IMR-90 (cell line): ENCODE measurements at regions of chr20 and their contacts with region 1.

Region 1: DNA sequence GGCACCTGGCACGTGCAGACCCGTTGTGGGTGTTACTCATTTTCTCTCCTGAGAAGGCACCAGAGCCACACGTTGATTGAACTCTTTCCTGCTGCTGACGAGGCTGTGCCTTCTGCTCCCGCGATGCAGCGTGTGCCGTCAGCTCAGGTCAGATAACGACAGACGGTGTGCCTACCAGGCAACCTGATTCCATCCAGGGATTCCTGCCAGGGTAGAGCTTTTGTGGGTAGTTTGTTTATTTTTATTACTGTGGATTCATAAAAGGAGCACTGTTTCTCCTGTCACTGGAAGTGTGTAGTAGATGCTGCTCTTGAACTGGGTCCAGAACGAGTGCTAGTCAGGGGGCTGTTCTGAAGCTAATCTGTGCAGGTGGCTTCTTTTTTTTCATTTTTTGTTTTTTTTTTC is 20.7 kb downstream of the PRPF6 start:
- DNase-seq: peak; percentile 40
- ATAC-seq: peak; percentile 33
- H3K4me3 ChIP-seq: no peak overlapping the region
- H3K27ac ChIP-seq: no peak overlapping the region
- H3K4me1 ChIP-seq: peaks cover 2% of the 10 kb centered on the region; the same call in 1 of the 2 replicates
- H3K27me3 ChIP-seq: no peaks in the 10 kb centered on the region
- CTCF ChIP-seq: no peak
- POLR2A ChIP-seq: no peak
- RAD21 ChIP-seq: no peak

Region 2: DNA sequence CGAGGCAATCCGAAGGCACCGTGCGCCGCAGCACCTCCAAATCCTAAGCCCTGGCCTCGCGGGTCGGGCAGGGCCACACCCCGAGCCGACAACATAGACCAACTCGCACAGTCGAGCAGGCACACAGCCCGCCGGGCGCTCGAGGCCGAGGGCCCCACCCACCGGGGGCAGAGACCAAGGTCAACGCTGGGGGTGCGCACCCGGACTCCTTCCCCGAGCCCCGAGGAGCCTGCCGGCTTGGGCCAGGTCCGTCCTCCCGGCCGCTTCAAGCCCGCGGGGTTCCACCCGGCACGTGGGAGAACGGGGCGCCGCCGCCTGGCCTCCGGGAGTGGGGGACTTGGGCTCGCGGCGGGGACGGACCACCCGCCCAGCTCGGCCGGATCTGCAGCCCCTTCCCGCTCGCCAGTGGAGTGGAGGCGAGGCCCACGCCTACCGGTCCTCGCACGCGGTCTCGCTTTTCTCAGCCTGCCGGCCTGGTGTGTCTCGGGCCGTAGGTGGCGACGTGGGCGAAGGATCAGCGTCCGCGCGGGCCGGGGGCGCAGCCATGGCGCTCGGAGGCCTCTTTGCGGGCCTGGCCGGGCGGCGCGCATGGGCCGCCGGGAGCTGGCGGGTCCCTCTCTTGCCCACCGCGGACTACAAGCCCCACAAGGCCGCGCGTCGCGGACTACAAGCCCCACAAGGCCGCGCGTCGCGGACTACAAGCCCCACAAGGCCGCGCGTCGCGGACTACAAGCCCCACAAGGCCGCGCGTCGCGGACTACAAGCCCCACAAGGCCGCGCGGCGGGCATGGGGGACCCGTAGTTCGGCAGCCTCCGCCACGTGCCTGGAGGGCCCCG is 45.6 kb before region 1 on chr20 and contains the start of gene UCKL1:
- CTCF ChIA-PET with region 1: interaction called, 10 read pairs
- POLR2A ChIA-PET with region 1: no interaction called
- dilution Hi-C with region 1: no loop called
- in situ Hi-C with region 1: no loop called
- intact Hi-C with region 1: no loop called
- DNase-seq: peak; percentile 91
- ATAC-seq: peak; percentile 79
- H3K4me3 ChIP-seq: peak within 1 kb of the TSS; percentile 94
- H3K27ac ChIP-seq: peak within 1 kb of the TSS; percentile 99
- H3K4me1 ChIP-seq: peaks cover 24% of the 10 kb centered on the region
- H3K27me3 ChIP-seq: no peaks in the 10 kb centered on the region
- CTCF ChIP-seq: no peak
- POLR2A ChIP-seq: peak; percentile 33; the same call in 1 of the 2 replicates
- RAD21 ChIP-seq: no peak
- total RNA-seq, gene UCKL1: 16.7 and 18.3 TPM in 2 replicates

Region 3: GRCh38 chr20:64223526-64224067 is 222.0 kb after region 1 on chr20:
- CTCF ChIA-PET with region 1: no interaction called
- POLR2A ChIA-PET with region 1: no interaction called
- dilution Hi-C with region 1: no loop called
- in situ Hi-C with region 1: no loop called
- intact Hi-C with region 1: no loop called
- DNase-seq: peak; percentile 46
- ATAC-seq: peak; percentile 25
- H3K4me3 ChIP-seq: no peak overlapping the region
- H3K27ac ChIP-seq: peak overlapping the region; percentile 86
- H3K4me1 ChIP-seq: peaks cover 27% of the 10 kb centered on the region
- H3K27me3 ChIP-seq: peaks cover 20% of the 10 kb centered on the region
- CTCF ChIP-seq: peak; percentile 47
- POLR2A ChIP-seq: no peak
- RAD21 ChIP-seq: peak; percentile 35